IMR-90 (cell line): ENCODE measurements at regions of chr1 and their contacts with region 1.

Region 1: GRCh38 chr1:30779294-30780071 is 21.9 kb upstream of the LAPTM5 start:
- DNase-seq: peak; percentile 48
- ATAC-seq: peak; percentile 74
- H3K4me3 ChIP-seq: no peak overlapping the region
- H3K27ac ChIP-seq: no peak overlapping the region
- H3K4me1 ChIP-seq: no peaks in the 10 kb centered on the region
- H3K27me3 ChIP-seq: no peaks in the 10 kb centered on the region; the same call in 1 of the 2 replicates
- CTCF ChIP-seq: peak; percentile 93
- POLR2A ChIP-seq: no peak
- RAD21 ChIP-seq: peak; percentile 84

Region 2: GRCh38 chr1:30489737-30490389 is 289.6 kb before region 1 on chr1:
- CTCF ChIA-PET with region 1: no interaction called
- POLR2A ChIA-PET with region 1: no interaction called
- dilution Hi-C with region 1: no loop called
- in situ Hi-C with region 1: no loop called
- intact Hi-C with region 1: no loop called
- DNase-seq: no peak
- ATAC-seq: no peak
- H3K4me3 ChIP-seq: no peak overlapping the region
- H3K27ac ChIP-seq: no peak overlapping the region
- H3K4me1 ChIP-seq: no peaks in the 10 kb centered on the region
- H3K27me3 ChIP-seq: no peaks in the 10 kb centered on the region
- CTCF ChIP-seq: no peak
- POLR2A ChIP-seq: no peak
- RAD21 ChIP-seq: no peak

Region 3: GRCh38 chr1:30727824-30728223 is 51.7 kb before region 1 on chr1:
- CTCF ChIA-PET with region 1: interaction called, 30 read pairs
- POLR2A ChIA-PET with region 1: no interaction called
- dilution Hi-C with region 1: no loop called
- in situ Hi-C with region 1: no loop called
- intact Hi-C with region 1: loop called (anchors 2 kb)
- DNase-seq: peak; percentile 66
- ATAC-seq: peak; percentile 94
- H3K4me3 ChIP-seq: no peak overlapping the region
- H3K27ac ChIP-seq: no peak overlapping the region
- H3K4me1 ChIP-seq: peaks cover 10% of the 10 kb centered on the region; the same call in 1 of the 2 replicates
- H3K27me3 ChIP-seq: peaks cover 7% of the 10 kb centered on the region; the same call in 1 of the 2 replicates
- CTCF ChIP-seq: no peak
- POLR2A ChIP-seq: no peak
- RAD21 ChIP-seq: no peak

Region 4: DNA sequence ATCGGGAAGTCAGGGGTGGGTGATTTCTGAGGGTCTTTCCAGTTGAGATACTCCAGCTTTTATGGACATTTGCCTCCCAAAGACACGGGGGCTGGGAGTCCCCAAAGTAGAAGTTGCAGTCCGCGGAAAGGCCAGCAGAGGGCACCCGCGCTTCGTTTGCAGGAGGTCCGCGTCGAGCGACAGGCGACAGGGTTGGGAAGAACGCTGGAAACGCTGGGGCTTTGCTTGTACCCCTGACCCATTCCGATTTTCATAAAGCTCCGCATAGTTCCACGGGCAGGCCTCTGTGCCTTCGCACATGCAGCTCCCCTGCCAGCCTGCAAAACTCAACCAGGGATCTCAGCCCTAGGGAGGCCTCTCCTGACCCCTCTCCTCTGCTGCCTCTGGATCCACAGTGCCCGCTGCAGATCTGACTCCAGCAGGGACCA is 22.3 kb after region 1 on chr1:
- CTCF ChIA-PET with region 1: interaction called, 12 read pairs
- POLR2A ChIA-PET with region 1: no interaction called
- dilution Hi-C with region 1: no loop called
- in situ Hi-C with region 1: no loop called
- intact Hi-C with region 1: no loop called
- DNase-seq: peak; percentile 48
- ATAC-seq: peak; percentile 91
- H3K4me3 ChIP-seq: no peak overlapping the region
- H3K27ac ChIP-seq: no peak overlapping the region
- H3K4me1 ChIP-seq: peaks cover 9% of the 10 kb centered on the region; the same call in 1 of the 2 replicates
- H3K27me3 ChIP-seq: no peaks in the 10 kb centered on the region
- CTCF ChIP-seq: peak; percentile 96
- POLR2A ChIP-seq: peak; percentile 45; the same call in 1 of the 2 replicates
- RAD21 ChIP-seq: peak; percentile 98

Region 5: GRCh38 chr1:30929135-30929889 is 149.8 kb after region 1 on chr1:
- CTCF ChIA-PET with region 1: interaction called, 6 read pairs
- POLR2A ChIA-PET with region 1: no interaction called
- dilution Hi-C with region 1: no loop called
- in situ Hi-C with region 1: no loop called
- intact Hi-C with region 1: loop called (anchors 5 kb)
- DNase-seq: peak; percentile 36
- ATAC-seq: peak; percentile 80
- H3K4me3 ChIP-seq: no peak overlapping the region
- H3K27ac ChIP-seq: no peak overlapping the region
- H3K4me1 ChIP-seq: peaks cover 7% of the 10 kb centered on the region
- H3K27me3 ChIP-seq: no peaks in the 10 kb centered on the region
- CTCF ChIP-seq: peak; percentile 65
- POLR2A ChIP-seq: no peak
- RAD21 ChIP-seq: peak; percentile 66

Region 6: DNA sequence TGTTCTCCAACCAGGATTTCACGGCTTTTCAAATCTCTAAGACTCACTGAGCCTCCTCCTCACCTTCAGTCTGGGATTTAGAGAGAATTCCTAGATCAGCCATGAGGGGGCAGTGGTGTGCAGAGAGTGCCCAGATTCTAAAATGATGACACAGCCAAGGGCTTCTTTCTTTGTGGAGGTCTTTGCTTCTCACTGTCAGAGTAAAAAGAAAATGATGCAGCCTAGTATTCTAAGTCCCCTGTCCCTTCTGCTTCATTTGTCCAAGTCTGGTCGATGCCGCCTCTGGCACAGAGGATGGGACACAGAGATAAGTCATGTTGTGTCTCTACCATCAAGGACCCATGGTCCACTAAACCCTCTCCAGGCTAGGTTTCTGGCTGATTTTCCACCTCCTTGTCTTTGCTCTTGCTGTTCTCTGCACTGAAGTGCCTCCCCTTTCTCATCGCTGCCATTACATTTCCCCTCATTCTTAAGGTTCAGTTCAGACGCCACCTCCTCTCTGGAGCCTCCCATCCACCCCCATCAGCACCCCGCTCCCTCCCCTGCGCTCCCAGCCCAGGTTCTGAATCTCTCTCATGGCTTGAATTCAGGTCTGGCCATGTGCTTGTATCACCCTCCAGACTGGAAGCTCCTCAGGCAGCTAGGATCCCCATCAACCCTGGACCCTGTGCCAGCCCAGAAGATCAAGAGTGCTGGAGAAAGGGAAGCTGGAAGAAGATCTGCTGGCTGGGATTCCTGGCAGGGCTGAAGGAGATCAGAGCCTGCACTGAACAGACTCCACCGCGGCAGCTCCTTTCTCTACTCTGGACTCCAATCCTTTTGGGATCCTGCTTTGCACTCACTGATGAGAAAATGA is 784.9 kb after region 1 on chr1:
- CTCF ChIA-PET with region 1: no interaction called
- POLR2A ChIA-PET with region 1: no interaction called
- dilution Hi-C with region 1: no loop called
- in situ Hi-C with region 1: no loop called
- intact Hi-C with region 1: no loop called
- DNase-seq: peak; percentile 47
- ATAC-seq: peak; percentile 94
- H3K4me3 ChIP-seq: no peak overlapping the region
- H3K27ac ChIP-seq: no peak overlapping the region
- H3K4me1 ChIP-seq: peaks cover 2% of the 10 kb centered on the region; the same call in 1 of the 2 replicates
- H3K27me3 ChIP-seq: peaks cover 5% of the 10 kb centered on the region; the same call in 1 of the 2 replicates
- CTCF ChIP-seq: peak; percentile 94
- POLR2A ChIP-seq: 0 out of 2 replicates have a peak, but pooled peaks have one; percentile 32
- RAD21 ChIP-seq: peak; percentile 93